Activated naive CD4-positive, alpha-beta T cell treated with anti-CD3 and anti-CD28 coated beads for 36 hours (primary cell): ENCODE measurements at regions of chr1 and their contacts with region 1.

Region 1: DNA sequence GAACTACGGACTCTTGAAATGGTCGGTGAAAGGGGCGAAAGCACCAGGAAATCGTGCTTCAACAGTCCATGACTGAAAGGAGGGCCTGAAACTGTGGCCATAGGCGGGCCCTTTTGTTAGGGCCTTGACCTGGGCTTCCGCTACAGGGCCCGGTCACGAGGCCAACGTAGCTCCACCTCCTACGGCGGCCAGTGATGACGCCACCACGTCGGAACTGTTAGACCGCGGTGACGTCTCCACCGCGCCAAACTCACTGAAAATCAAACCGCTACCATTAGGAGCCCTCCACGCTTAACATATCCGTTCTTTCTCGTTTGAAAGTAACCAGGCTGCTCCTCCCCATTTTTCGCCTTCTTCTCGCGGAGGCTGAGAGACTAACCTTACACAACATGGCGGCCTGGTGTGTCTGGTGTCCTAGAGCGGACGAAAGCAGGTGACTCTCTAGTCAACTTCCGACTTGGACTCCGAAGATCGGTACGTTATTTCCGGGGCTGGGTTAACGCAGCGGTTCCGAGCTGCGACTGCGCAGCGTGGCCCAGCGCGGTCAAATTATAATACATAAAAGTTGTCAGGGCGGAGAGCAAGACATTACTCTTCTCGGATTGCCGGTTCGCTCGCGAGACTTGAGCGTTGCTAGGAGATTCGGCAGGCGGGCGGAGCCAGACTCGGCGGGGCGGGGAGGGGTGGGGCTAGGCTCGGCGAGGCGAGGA is 376 bp upstream of the CACYBP start:
- DNase-seq: peak; percentile 98
- H3K4me3 Mint-ChIP-seq: no peak overlapping the region
- H3K27ac Mint-ChIP-seq: no peak overlapping the region
- H3K4me1 Mint-ChIP-seq: peaks cover 46% of the 10 kb centered on the region
- H3K27me3 Mint-ChIP-seq: no peaks in the 10 kb centered on the region

Region 2: GRCh38 chr1:173297798-173298391 is 1701.5 kb before region 1 on chr1:
- CTCF ChIA-PET with region 1: no interaction called
- intact Hi-C with region 1: loop called (anchors 1 kb)
- DNase-seq: peak; percentile 76
- H3K4me3 Mint-ChIP-seq: no peak overlapping the region
- H3K27ac Mint-ChIP-seq: peak overlapping the region; percentile 2
- H3K4me1 Mint-ChIP-seq: peaks cover 41% of the 10 kb centered on the region
- H3K27me3 Mint-ChIP-seq: no peaks in the 10 kb centered on the region

Region 3: GRCh38 chr1:173824331-173825081 is 1174.9 kb before region 1 on chr1 and contains the starts of genes CENPL and DARS2:
- CTCF ChIA-PET with region 1: no interaction called
- intact Hi-C with region 1: loop called (anchors 1 kb)
- DNase-seq: peak; percentile 95
- H3K4me3 Mint-ChIP-seq: peak within 1 kb of the TSS; percentile 93
- H3K27ac Mint-ChIP-seq: peak within 1 kb of the TSS; percentile 98
- H3K4me1 Mint-ChIP-seq: peaks cover 46% of the 10 kb centered on the region
- H3K27me3 Mint-ChIP-seq: no peaks in the 10 kb centered on the region
- total RNA-seq, gene CENPL: 31.1 to 31.9 TPM
- total RNA-seq, gene DARS2: 42.7 to 44.1 TPM

Region 4: DNA sequence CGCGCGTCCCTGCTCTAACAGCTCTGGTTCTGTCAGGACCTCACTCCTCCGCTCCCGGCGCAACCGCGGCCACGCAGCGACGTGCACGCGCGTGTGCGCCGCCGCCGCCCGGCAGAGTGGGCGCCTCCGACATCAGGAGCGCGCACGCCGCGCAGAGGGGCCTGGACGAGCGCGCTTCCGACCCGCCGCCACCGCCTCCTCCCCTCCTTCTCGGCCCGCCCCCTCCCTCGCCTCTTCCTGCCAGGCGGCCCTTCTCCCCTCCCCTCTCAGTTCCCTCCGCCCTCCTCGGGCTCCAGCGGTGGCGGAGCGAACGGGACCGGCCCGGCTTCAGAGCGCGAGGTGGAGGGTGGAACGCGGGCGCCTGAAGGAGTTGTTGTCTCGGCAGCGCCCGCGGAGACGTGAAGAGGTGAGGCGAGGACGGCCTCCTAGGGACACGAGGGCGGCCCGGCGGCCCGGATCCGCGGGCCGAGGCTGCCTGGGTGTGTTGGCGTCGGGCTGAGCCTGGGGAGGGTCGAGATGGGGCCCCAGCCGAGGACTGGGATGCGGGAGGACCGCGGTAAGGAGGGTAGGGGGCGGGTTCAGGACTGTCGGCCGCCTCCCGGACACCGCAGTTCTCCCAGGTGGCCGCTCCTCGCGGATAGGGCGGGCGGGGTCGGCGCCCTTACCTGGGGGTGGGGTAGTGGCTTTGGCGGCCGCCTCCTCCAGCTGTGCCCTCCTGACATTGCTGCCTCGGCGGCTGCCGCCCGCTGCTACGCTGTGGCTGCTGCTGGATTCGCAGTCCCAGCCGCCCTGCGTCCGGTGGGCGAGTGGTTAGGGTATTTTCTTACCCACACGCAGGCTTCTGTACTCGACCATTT is 839.9 kb before region 1 on chr1 and contains the start of gene RABGAP1L:
- CTCF ChIA-PET with region 1: no interaction called
- intact Hi-C with region 1: loop called (anchors 1 kb)
- DNase-seq: peak; percentile 94
- H3K4me3 Mint-ChIP-seq: peak within 1 kb of the TSS; percentile 83
- H3K27ac Mint-ChIP-seq: peak within 1 kb of the TSS; percentile 93
- H3K4me1 Mint-ChIP-seq: peaks cover 56% of the 10 kb centered on the region
- H3K27me3 Mint-ChIP-seq: no peaks in the 10 kb centered on the region
- total RNA-seq, gene RABGAP1L: 16.6 TPM

Region 5: GRCh38 chr1:174800216-174800851 is 199.0 kb before region 1 on chr1:
- CTCF ChIA-PET with region 1: interaction called, 9 read pairs
- intact Hi-C with region 1: loop called (anchors 1 kb)
- DNase-seq: peak; percentile 47
- H3K4me3 Mint-ChIP-seq: no peak overlapping the region
- H3K27ac Mint-ChIP-seq: no peak overlapping the region
- H3K4me1 Mint-ChIP-seq: peaks cover 8% of the 10 kb centered on the region
- H3K27me3 Mint-ChIP-seq: no peaks in the 10 kb centered on the region

Region 6: DNA sequence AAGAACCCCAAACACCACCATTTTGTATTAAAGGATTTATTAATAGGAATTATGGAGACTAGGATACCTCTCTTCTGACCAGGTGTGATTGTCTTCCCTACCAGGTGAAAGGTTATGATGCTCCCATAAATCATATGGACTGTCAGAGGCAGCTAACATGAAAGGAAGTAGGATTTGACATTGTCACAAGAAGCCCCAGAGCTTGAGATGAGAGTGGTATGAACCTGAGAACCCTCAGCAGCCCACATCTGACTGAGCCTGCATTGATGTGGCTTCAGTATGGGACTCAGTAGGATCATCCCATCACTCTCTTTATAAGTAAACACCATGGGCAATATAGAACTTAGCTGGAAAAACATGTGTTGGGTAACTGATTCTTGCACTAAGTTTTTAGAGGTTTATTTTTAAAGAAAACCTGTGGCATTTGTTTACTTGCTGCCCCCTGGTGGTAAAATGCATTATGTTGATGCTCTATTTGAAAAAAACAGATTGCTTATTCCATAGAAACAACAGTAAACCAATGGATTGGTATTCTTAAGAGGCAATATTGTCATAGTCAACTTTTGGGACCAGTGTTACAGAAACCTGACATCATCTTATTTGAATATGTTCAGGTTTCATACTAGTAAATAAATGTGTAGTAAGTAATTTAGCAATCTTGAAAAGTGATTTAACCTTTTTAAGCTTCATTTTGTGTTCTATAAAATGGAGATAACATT is 16.2 kb before region 1 on chr1:
- CTCF ChIA-PET with region 1: interaction called, 11 read pairs
- intact Hi-C with region 1: loop called (anchors 2 kb)
- DNase-seq: peak; percentile 56
- H3K4me3 Mint-ChIP-seq: no peak overlapping the region
- H3K27ac Mint-ChIP-seq: no peak overlapping the region
- H3K4me1 Mint-ChIP-seq: peaks cover 18% of the 10 kb centered on the region
- H3K27me3 Mint-ChIP-seq: no peaks in the 10 kb centered on the region

Region 7: GRCh38 chr1:175072099-175072951 is 73.0 kb after region 1 on chr1:
- CTCF ChIA-PET with region 1: no interaction called
- intact Hi-C with region 1: no loop called
- DNase-seq: peak; percentile 76
- H3K4me3 Mint-ChIP-seq: no peak overlapping the region
- H3K27ac Mint-ChIP-seq: no peak overlapping the region
- H3K4me1 Mint-ChIP-seq: peaks cover 12% of the 10 kb centered on the region
- H3K27me3 Mint-ChIP-seq: peaks cover 10% of the 10 kb centered on the region

Region 8: DNA sequence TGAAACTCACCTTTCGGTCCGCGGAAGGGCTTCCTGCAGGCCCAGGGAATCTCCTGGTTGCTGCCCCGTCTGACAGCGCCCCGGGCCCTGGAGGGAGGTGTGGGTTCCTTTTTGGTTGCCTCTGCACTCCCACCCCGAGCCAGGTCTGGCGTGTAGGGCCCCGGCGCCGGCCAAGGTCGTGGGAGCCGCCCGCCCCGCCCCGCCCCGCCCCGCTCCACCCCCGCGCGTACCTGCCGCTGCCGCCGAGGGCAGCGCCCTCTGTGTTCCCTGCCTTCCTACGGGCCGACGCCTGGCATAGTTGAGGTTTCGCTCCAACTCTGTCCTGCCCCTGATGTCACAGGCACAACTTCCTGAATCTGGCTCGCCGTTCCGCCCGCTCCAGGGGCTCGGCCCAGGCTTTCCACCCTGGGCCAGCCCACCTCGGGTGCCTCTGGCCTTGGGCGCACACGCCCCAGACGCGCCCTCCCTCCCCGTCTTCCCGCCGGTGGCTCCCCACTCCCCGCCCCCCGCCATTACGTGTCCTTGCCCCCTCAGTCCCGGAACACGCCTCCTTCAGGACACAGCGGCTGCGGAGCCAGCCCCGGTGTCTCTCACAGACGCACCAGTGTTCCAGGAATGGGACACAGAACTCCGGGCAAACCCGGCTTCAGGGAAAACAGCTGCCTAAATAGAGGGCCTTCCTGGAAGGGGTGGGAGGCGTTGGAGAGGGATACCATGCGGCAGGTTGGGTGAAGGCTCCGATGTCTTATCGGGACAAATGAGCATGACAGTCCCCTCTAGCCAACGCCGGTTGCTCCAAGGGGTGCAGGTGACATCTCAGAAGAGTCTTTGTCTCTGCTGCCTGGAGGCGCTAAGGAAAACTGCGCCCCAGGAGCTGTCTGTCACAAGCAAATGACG is 193.5 kb after region 1 on chr1 and contains the start of gene KIAA0040:
- CTCF ChIA-PET with region 1: no interaction called
- intact Hi-C with region 1: loop called (anchors 1 kb)
- DNase-seq: peak; percentile 63
- H3K4me3 Mint-ChIP-seq: peak within 1 kb of the TSS; percentile 92
- H3K27ac Mint-ChIP-seq: peak within 1 kb of the TSS; percentile 93
- H3K4me1 Mint-ChIP-seq: peaks cover 45% of the 10 kb centered on the region
- H3K27me3 Mint-ChIP-seq: no peaks in the 10 kb centered on the region
- total RNA-seq, gene KIAA0040: 19.5 to 21.4 TPM

Region 9: GRCh38 chr1:175413367-175413766 is 414.0 kb after region 1 on chr1:
- CTCF ChIA-PET with region 1: no interaction called
- intact Hi-C with region 1: no loop called
- DNase-seq: no peak
- H3K4me3 Mint-ChIP-seq: no peak overlapping the region
- H3K27ac Mint-ChIP-seq: no peak overlapping the region
- H3K4me1 Mint-ChIP-seq: no peaks in the 10 kb centered on the region
- H3K27me3 Mint-ChIP-seq: peaks cover 3% of the 10 kb centered on the region